ENCODE measurements at regions of chr11 and their contacts with region 1.

Region 1: DNA sequence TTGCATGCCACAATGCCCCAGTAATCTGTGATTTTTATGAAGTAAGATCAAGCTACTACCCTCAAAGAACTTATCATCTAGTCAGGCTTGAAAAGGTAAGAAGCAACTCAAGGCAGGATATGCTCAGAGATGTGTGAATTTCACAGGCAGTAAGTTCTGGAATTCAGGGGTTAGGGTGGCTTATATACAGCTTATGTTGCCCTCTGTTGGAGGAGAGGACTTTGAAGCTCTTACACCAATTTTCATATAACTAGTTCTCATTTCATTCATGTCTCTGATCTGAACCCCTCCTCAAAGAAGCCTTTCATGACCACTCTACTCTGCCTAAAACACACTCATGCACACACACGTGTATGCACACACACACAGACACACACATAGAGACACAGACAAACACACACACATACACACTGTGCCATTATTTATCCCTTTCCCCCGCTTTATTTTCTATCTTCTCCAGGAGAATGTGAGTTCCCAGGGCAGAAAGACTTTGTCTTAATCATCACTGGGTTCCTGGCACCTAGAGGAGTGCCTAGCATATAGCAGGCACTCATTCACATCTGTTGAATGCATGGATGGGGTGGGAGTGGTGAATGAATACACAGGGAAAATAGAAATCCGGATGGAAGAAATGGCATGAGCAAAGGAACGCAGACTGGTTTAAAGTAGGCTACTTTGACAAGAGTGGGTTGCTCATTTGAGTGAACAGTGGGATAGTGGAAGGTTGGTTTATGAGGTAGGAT is 220.7 kb upstream of the ZBED5 start:
- DNase-seq: peak; percentile 7
- H3K4me3 ChIP-seq: no peak overlapping the region
- H3K27ac ChIP-seq: no peak overlapping the region
- H3K4me1 ChIP-seq: no peaks in the 10 kb centered on the region
- H3K27me3 ChIP-seq: no peaks in the 10 kb centered on the region
- CTCF ChIP-seq: peak in 1 of 2 donors; percentile 24

Region 2: GRCh38 chr11:11105358-11105757 is 26.8 kb after region 1 on chr11:
- CTCF ChIA-PET with region 1: no interaction called
- dilution Hi-C with region 1: no loop called
- in situ Hi-C with region 1: no loop called
- intact Hi-C with region 1: loop called (anchors 2 kb)
- DNase-seq: no peak
- H3K4me3 ChIP-seq: no peak overlapping the region
- H3K27ac ChIP-seq: no peak overlapping the region
- H3K4me1 ChIP-seq: no peaks in the 10 kb centered on the region
- H3K27me3 ChIP-seq: no peaks in the 10 kb centered on the region
- CTCF ChIP-seq: no peak

Region 3: GRCh38 chr11:11760838-11761237 is 682.3 kb after region 1 on chr11:
- CTCF ChIA-PET with region 1: interaction called, 13 read pairs
- dilution Hi-C with region 1: no loop called
- in situ Hi-C with region 1: no loop called
- intact Hi-C with region 1: no loop called
- DNase-seq: no peak
- H3K4me3 ChIP-seq: no peak overlapping the region
- H3K27ac ChIP-seq: no peak overlapping the region
- H3K4me1 ChIP-seq: no peaks in the 10 kb centered on the region
- H3K27me3 ChIP-seq: no peaks in the 10 kb centered on the region
- CTCF ChIP-seq: no peak